Natural killer cell (primary cell): ENCODE measurements at regions of chr19 and their contacts with region 1.

Region 1: DNA sequence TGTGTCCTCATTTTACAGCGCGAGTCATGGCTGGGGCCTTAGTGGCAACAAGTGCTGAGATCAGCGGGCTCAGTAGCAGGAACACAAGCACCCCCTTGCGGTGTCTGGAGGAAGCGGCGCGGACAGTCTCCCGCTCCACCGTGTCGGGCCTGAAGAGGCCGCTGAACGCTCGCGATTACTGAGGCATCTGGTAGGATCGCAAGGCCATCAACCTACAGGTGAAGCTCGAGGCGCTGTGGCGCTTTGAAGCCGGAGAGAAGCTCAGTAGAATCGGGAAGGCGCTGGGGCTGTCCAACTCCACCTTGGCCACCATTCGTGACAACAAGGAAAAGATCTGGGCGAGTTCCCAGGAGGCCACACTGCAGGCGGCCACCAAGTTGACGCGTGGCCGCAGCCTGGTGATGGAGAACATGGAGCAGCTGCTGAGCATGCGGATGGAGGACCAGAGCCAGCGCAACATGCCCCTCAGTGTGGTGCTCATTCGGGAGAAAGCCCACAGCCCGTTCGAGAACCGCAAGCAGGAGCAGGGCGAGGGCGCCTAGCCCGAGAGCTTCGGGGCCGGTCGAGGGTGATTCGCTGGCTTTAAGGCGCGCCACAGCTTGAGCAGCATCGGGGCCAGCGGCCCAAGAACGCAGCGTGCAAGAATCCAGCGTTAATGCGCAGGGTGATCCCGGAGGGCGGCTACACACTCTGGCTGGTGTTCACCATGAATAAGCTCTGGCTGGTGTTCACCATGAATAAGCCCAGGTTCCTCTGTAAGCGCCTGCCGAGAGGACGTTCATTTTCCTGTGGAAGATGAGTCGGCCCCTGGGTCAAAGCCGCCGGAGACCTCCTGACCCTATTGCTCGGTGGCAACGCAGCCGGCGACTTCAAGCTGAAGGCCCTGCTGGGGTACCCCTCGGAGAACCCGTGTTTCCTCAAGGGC is 8.4 kb upstream of the MZF1 start:
- DNase-seq: peak; percentile 90 to 94
- ATAC-seq: peak; percentile 99 to 100 (median 99)
- H3K4me3 ChIP-seq: no peak overlapping the region
- H3K4me3 Mint-ChIP-seq: peak overlapping the region; percentile 42
- H3K27ac ChIP-seq: peak overlapping the region; percentile 32
- H3K27ac Mint-ChIP-seq: peak overlapping the region; percentile 71 to 84
- H3K4me1 ChIP-seq: peaks cover 8% of the 10 kb centered on the region
- H3K4me1 Mint-ChIP-seq: peaks cover 12 to 15% of the 10 kb centered on the region in 2 donors
- H3K27me3 ChIP-seq: no peaks in the 10 kb centered on the region
- H3K27me3 Mint-ChIP-seq: no peaks in the 10 kb centered on the region
- CTCF ChIP-seq: peak; percentile 89

Region 2: GRCh38 chr19:58451358-58452101 is 130.0 kb before region 1 on chr19 and contains the start of gene ZNF324B:
- intact Hi-C with region 1: no loop called
- DNase-seq: peak; percentile 95 to 99
- ATAC-seq: peak; percentile 95 to 98 (median 95)
- H3K4me3 ChIP-seq: peak within 1 kb of the TSS; percentile 53
- H3K4me3 Mint-ChIP-seq: peak within 1 kb of the TSS; percentile 91
- H3K27ac ChIP-seq: peak within 1 kb of the TSS; percentile 52
- H3K27ac Mint-ChIP-seq: peak within 1 kb of the TSS; percentile 84 to 89
- H3K4me1 ChIP-seq: peaks cover 15% of the 10 kb centered on the region
- H3K4me1 Mint-ChIP-seq: peaks cover 19 to 26% of the 10 kb centered on the region in 2 donors
- H3K27me3 ChIP-seq: no peaks in the 10 kb centered on the region
- H3K27me3 Mint-ChIP-seq: peaks cover 18 to 30% of the 10 kb centered on the region in 2 donors
- CTCF ChIP-seq: no peak
- total RNA-seq, gene ZNF324B: 10.4 to 11.4 (median 11.4) TPM

Region 3: GRCh38 chr19:58513694-58514563 is 67.6 kb before region 1 on chr19:
- intact Hi-C with region 1: loop called (anchors 1 kb)
- DNase-seq: peak; percentile 91 to 98
- ATAC-seq: peak; percentile 95 to 97 (median 96)
- H3K4me3 ChIP-seq: no peak overlapping the region
- H3K4me3 Mint-ChIP-seq: peak overlapping the region; percentile 84
- H3K27ac ChIP-seq: peak overlapping the region; percentile 64
- H3K27ac Mint-ChIP-seq: peak overlapping the region; percentile 76 to 85
- H3K4me1 ChIP-seq: peaks cover 41% of the 10 kb centered on the region
- H3K4me1 Mint-ChIP-seq: peaks cover 10 to 41% of the 10 kb centered on the region in 2 donors
- H3K27me3 ChIP-seq: no peaks in the 10 kb centered on the region
- H3K27me3 Mint-ChIP-seq: no peaks in the 10 kb centered on the region
- CTCF ChIP-seq: peak; percentile 79

Region 4: GRCh38 chr19:58519355-58520256 is 61.9 kb before region 1 on chr19 and contains the start of gene ZBTB45:
- intact Hi-C with region 1: loop called (anchors 1 kb)
- DNase-seq: peak; percentile 91 to 95
- ATAC-seq: peak; percentile 80 to 93 (median 83)
- H3K4me3 ChIP-seq: peak within 1 kb of the TSS; percentile 81
- H3K4me3 Mint-ChIP-seq: peak within 1 kb of the TSS; percentile 97
- H3K27ac ChIP-seq: peak within 1 kb of the TSS; percentile 98
- H3K27ac Mint-ChIP-seq: peak within 1 kb of the TSS; percentile 97 to 100
- H3K4me1 ChIP-seq: peaks cover 38% of the 10 kb centered on the region
- H3K4me1 Mint-ChIP-seq: peaks cover 25 to 46% of the 10 kb centered on the region in 2 donors
- H3K27me3 ChIP-seq: no peaks in the 10 kb centered on the region
- H3K27me3 Mint-ChIP-seq: no peaks in the 10 kb centered on the region
- CTCF ChIP-seq: peak; percentile 71
- total RNA-seq, gene ZBTB45: 9.6 to 12.6 (median 9.8) TPM